OCI-LY7 (cell line): ENCODE measurements at regions of chr5 and their contacts with region 1.

Region 1: DNA sequence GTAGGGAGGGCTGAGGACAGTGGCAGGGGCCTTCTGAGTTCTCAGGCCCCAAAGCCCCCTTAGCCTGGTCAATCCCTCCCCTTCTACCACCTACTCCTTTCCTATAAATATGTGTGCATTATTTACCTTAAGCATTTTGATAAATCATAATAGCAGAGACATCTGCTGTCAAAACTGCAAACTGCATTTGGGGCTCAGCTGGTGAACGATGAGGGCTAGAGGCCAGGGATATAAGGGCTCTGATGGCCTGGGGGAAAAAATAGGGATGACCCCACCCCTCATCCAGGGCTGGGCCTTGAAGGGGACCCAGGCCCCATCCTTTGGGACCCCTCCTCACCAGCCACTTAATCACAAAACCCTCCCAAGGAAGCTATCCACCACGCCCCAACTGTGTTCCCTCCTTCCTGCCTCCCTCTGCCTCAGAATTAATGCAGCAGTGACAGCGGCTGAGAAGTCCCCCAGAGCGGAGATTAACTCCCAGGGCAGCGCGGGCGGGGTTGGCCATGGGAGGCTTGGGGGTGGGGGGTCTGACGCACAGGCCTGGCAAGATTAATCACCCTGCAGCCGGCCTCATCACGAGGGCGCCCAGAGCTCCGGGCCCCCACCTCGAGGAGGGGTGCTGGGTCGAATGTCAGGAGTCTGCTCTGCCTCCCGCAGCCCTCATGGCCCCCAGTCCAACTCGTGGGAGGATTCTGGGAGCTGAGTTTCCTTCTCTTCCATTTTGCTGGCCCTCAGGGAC is 42.1 kb downstream of the CXXC5 start:
- DNase-seq: peak; percentile 69
- H3K4me3 ChIP-seq: peak overlapping the region; percentile 28
- H3K27ac ChIP-seq: peak overlapping the region; percentile 90
- H3K4me1 ChIP-seq: peaks cover 55% of the 10 kb centered on the region
- CTCF ChIP-seq: peak; percentile 89

Region 2: GRCh38 chr5:139422307-139422893 is 267.8 kb before region 1 on chr5:
- CTCF ChIA-PET with region 1: no interaction called
- POLR2A ChIA-PET with region 1: interaction called, 3 read pairs
- intact Hi-C with region 1: loop called (anchors 2 kb)
- DNase-seq: peak; percentile 79
- H3K4me3 ChIP-seq: no peak overlapping the region
- H3K27ac ChIP-seq: no peak overlapping the region
- H3K4me1 ChIP-seq: no peaks in the 10 kb centered on the region
- CTCF ChIP-seq: peak; percentile 99

Region 3: DNA sequence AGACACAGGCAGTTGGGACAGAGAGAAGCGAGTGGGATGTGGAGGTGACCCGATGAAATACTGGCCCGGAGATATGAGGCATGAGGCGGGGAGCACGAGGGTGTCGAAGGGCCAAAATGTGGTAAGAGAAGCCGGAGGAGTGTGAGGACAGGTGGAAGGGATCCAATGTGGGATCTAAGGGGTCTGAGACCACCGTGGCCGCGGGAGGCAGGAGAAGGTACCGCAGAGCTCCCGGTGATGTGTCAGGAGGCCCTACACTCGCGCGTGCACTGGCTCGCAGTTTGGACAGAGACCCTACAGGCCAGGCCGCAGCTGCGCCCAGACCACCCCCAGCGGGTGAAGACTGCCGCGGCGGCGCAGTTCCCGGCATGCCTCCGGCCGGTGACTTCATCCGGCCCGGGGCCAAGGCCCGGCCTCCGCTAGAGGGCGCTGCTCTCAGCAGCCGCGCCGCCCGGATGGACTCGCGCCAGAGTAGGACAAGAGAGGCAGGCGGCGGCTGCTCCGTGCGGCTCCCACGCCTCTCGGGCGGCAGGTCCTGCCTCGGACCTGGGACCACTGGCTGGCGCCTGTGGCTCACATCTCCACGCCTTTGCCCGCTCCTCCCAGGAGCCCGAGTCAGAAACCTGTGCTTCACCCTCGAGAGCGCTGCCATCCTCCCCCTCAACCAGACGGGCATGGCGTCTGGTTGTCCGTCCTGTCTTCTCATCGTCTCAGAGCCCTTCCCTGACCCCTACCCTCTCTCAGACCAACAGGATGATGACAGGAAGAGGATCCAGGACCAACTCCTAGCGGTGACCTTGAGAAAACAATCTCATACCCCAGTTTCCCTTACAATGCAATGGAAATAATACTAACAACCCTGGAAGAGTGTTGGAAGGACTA is 172.3 kb before region 1 on chr5:
- CTCF ChIA-PET with region 1: no interaction called
- POLR2A ChIA-PET with region 1: no interaction called
- intact Hi-C with region 1: loop called (anchors 5 kb)
- DNase-seq: peak; percentile 90
- H3K4me3 ChIP-seq: peak overlapping the region; percentile 60
- H3K27ac ChIP-seq: no peak overlapping the region
- H3K4me1 ChIP-seq: peaks cover 30% of the 10 kb centered on the region
- CTCF ChIP-seq: peak; percentile 94

Region 4: DNA sequence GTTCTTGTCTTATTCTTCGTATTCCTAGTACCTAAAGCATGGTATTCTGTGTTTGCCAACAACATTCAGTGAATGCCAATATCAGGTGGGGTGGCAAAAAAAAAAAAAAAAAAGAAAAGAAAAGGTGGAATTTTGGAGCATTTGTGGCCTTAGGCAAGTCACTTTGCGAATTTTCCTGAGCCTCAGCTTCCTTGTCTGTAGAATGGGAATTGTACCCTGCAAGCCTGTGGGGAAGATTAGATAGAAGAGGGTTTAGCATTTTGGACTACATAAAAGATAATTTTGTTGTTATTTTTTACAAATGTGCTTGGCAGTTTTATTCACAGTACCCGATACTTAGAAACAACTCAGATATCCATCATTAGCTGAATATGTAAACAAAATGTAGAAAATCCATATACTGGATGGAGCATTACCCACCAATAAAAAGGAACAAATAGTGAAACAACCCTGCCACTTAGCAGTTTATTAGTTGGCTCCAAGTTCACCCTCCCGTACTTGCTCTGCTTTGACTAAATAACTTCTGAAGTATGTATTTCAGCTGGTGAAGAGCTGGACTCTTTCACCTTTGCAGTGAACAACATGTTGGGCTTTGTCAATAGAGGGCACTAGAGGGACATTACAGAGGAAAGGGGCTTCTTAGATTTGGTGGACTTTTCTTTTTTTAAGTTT is 115.5 kb before region 1 on chr5:
- CTCF ChIA-PET with region 1: no interaction called
- POLR2A ChIA-PET with region 1: no interaction called
- intact Hi-C with region 1: loop called (anchors 1 kb)
- DNase-seq: peak; percentile 79
- H3K4me3 ChIP-seq: peak overlapping the region; percentile 0
- H3K27ac ChIP-seq: peak overlapping the region; percentile 72
- H3K4me1 ChIP-seq: peaks cover 77% of the 10 kb centered on the region
- CTCF ChIP-seq: peak; percentile 94

Region 5: DNA sequence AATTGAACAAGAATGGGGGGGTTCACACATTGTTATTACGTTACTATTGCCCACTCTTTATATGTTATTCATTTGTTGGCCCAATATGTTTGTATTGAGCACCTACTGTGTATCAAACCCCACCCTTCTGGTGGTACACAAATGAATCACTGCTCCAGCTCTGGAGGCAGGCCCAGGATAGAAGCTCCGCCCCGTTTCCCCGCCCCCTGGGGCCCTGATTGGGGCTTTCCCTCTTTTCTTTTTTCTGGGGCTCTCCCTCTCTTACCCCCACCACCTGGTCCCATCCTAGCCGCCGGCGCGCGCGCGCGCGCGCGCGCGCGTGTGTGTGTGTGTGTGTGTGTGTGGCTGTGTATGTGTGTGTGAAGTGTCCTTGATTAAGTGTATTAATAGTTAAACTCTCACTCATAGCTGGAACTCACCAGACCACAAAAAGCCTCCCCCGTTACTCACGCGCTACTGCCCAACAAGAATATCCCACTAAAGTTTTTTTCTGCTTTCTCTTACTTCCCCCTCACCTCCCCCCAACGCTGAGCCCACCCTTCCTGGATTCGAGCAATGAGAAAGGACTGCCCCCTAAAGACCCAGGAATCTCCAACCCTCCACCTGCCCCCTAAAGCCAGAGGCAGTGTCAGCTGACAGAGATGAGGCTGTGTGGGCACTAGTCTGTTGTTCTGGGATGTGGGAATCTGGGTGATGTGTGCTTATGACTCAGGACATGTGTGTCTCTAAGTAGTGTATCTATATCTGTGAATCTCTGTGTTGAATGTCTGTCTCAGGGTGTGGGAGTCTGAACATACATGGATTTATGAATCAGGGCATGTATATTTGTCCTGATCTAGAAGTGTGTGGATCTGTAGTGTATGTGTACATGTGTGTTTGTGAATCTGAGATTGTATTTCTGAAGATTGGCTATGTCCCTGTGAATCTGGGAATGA is 38.1 kb before region 1 on chr5:
- CTCF ChIA-PET with region 1: no interaction called
- POLR2A ChIA-PET with region 1: interaction called, 4 read pairs
- intact Hi-C with region 1: loop called (anchors 1 kb)
- DNase-seq: peak; percentile 87
- H3K4me3 ChIP-seq: peak overlapping the region; percentile 94
- H3K27ac ChIP-seq: peak overlapping the region; percentile 89
- H3K4me1 ChIP-seq: peaks cover 72% of the 10 kb centered on the region
- CTCF ChIP-seq: no peak

Region 6: GRCh38 chr5:139670369-139671095 is 19.7 kb before region 1 on chr5:
- CTCF ChIA-PET with region 1: interaction called, 7 read pairs
- POLR2A ChIA-PET with region 1: interaction called, 19 read pairs
- intact Hi-C with region 1: loop called (anchors 1 kb)
- DNase-seq: peak; percentile 98
- H3K4me3 ChIP-seq: peak overlapping the region; percentile 74
- H3K27ac ChIP-seq: peak overlapping the region; percentile 99
- H3K4me1 ChIP-seq: peaks cover 89% of the 10 kb centered on the region
- CTCF ChIP-seq: peak; percentile 82

Region 7: GRCh38 chr5:139765409-139766217 is 75.4 kb after region 1 on chr5:
- CTCF ChIA-PET with region 1: no interaction called
- POLR2A ChIA-PET with region 1: no interaction called
- intact Hi-C with region 1: loop called (anchors 1 kb)
- DNase-seq: peak; percentile 84
- H3K4me3 ChIP-seq: peak overlapping the region; percentile 69
- H3K27ac ChIP-seq: no peak overlapping the region
- H3K4me1 ChIP-seq: peaks cover 20% of the 10 kb centered on the region
- CTCF ChIP-seq: peak; percentile 97